ENCODE measurements at regions of chr7 and their contacts with region 1.

Region 1: GRCh38 chr7:131654668-131655326 is 98.4 kb upstream of the PODXL start:
- DNase-seq: peak; percentile 97
- ATAC-seq: peak; percentile 87
- H3K4me3 Mint-ChIP-seq: no peak overlapping the region
- H3K27ac Mint-ChIP-seq: no peak overlapping the region
- H3K4me1 Mint-ChIP-seq: peaks cover 46% of the 10 kb centered on the region
- H3K27me3 Mint-ChIP-seq: peaks cover 8% of the 10 kb centered on the region; the same call in 1 of the 2 replicates
- CTCF ChIP-seq: peak; percentile 99

Region 2: DNA sequence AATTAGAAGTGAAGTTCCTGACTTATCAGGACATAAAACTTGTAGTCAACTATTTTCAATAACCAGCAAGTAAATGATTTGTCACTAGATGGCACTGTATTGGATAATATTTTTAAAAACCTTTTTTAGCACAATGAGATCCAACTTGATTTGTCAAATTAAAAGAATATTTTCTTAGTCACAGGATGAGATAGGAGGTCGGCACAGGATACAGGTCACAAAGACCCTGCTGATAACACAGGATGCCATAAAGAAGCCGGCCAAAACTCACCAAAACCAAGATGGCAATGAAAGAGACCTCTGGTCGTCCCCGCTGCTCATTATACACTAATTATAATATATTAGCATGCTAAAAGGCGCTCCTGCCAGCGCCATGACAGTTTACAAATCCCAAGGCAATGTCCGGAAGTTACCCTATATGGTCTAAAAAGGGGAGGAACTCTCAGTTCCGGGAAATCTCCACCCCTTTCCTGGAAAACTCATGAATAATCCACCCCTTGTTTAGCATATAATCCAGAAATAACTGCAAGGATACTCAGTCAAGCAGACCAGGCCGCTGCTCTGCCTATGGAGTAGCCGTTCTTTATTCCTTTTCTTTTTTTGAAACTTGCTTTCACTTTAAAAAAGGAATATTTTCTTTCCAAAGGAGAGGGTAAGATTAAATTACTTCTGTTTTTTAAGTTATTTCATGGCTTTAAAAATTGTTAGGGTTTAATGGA is 582.9 kb before region 1 on chr7:
- CTCF ChIA-PET with region 1: no interaction called
- POLR2A ChIA-PET with region 1: no interaction called
- DNase-seq: no peak
- ATAC-seq: no peak
- H3K4me3 Mint-ChIP-seq: no peak overlapping the region
- H3K27ac Mint-ChIP-seq: 0 out of 2 replicates have a peak overlapping the region, but pooled peaks have one; percentile 14
- H3K4me1 Mint-ChIP-seq: peaks cover 47% of the 10 kb centered on the region
- H3K27me3 Mint-ChIP-seq: no peaks in the 10 kb centered on the region
- CTCF ChIP-seq: no peak

Region 3: GRCh38 chr7:131443496-131443895 is 211.3 kb before region 1 on chr7:
- CTCF ChIA-PET with region 1: no interaction called
- POLR2A ChIA-PET with region 1: no interaction called
- DNase-seq: no peak
- ATAC-seq: no peak
- H3K4me3 Mint-ChIP-seq: no peak overlapping the region
- H3K27ac Mint-ChIP-seq: no peak overlapping the region
- H3K4me1 Mint-ChIP-seq: peaks cover 13% of the 10 kb centered on the region
- H3K27me3 Mint-ChIP-seq: no peaks in the 10 kb centered on the region
- CTCF ChIP-seq: no peak

Region 4: DNA sequence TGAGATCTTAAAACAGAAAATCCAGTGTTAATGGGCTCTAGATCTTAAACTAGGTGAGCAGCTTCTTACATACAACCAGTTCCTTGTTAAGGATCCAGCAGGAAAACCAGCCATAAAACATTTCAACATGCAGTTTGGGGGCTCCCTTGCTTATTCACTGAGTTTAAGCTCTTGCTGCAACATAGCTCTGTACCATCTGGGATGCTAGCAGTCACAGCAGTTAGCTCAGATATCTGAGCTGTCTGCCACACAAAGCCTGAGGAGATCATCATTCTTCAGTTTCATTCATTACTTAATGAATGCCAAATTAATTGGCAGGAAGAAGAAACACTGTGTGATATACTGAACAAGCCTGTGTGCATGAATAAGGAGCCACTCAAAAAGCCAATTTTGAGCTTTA is 161.2 kb before region 1 on chr7:
- CTCF ChIA-PET with region 1: interaction called, 11 read pairs
- POLR2A ChIA-PET with region 1: no interaction called
- DNase-seq: no peak
- ATAC-seq: peak; percentile 6; the same call in 1 of the 2 replicates
- H3K4me3 Mint-ChIP-seq: no peak overlapping the region
- H3K27ac Mint-ChIP-seq: 0 out of 2 replicates have a peak overlapping the region, but pooled peaks have one; percentile 21
- H3K4me1 Mint-ChIP-seq: no peaks in the 10 kb centered on the region
- H3K27me3 Mint-ChIP-seq: no peaks in the 10 kb centered on the region
- CTCF ChIP-seq: no peak

Region 5: GRCh38 chr7:131513245-131514061 is 141.3 kb before region 1 on chr7:
- CTCF ChIA-PET with region 1: interaction called, 22 read pairs
- POLR2A ChIA-PET with region 1: no interaction called
- DNase-seq: peak; percentile 90
- ATAC-seq: peak; percentile 94
- H3K4me3 Mint-ChIP-seq: no peak overlapping the region
- H3K27ac Mint-ChIP-seq: peak overlapping the region; percentile 97
- H3K4me1 Mint-ChIP-seq: peaks cover 76% of the 10 kb centered on the region
- H3K27me3 Mint-ChIP-seq: no peaks in the 10 kb centered on the region
- CTCF ChIP-seq: peak; percentile 98

Region 6: GRCh38 chr7:131538071-131538790 is 116.6 kb before region 1 on chr7:
- CTCF ChIA-PET with region 1: interaction called, 10 read pairs
- POLR2A ChIA-PET with region 1: interaction called, 3 read pairs
- DNase-seq: no peak
- ATAC-seq: peak; percentile 7
- H3K4me3 Mint-ChIP-seq: no peak overlapping the region
- H3K27ac Mint-ChIP-seq: peak overlapping the region; percentile 95
- H3K4me1 Mint-ChIP-seq: peaks cover 90% of the 10 kb centered on the region
- H3K27me3 Mint-ChIP-seq: no peaks in the 10 kb centered on the region
- CTCF ChIP-seq: no peak

Region 7: DNA sequence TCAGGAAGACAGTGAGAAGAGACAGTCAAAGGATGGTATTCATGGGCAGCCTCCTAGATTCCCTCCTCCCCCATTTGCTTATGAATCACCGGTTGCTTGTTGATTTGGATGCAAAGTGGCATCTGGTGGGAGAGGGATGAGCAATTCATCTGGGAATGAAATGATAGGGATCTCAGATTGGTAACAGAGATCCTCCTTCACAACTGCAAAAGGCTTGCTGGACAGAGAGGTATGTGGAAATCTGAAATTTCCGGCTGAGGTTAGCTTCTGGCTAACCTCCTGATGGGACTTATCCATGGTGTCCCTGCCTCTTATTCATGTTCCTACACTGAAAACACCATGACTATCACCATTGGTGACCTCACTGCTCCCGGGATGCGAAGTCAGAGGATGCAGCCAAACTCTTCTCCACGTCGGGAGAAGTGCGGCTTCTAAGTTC is 49.9 kb before region 1 on chr7:
- CTCF ChIA-PET with region 1: interaction called, 19 read pairs
- POLR2A ChIA-PET with region 1: no interaction called
- DNase-seq: no peak
- ATAC-seq: peak; percentile 43
- H3K4me3 Mint-ChIP-seq: peak overlapping the region; percentile 59
- H3K27ac Mint-ChIP-seq: peak overlapping the region; percentile 100
- H3K4me1 Mint-ChIP-seq: peaks cover 81% of the 10 kb centered on the region
- H3K27me3 Mint-ChIP-seq: no peaks in the 10 kb centered on the region; the same call in 1 of the 2 replicates
- CTCF ChIP-seq: no peak

Region 8: GRCh38 chr7:131625817-131626372 is 28.9 kb before region 1 on chr7:
- CTCF ChIA-PET with region 1: interaction called, 25 read pairs
- POLR2A ChIA-PET with region 1: interaction called, 3 read pairs
- DNase-seq: peak; percentile 68
- ATAC-seq: peak; percentile 85
- H3K4me3 Mint-ChIP-seq: no peak overlapping the region; the same call in 1 of the 2 replicates
- H3K27ac Mint-ChIP-seq: peak overlapping the region; percentile 98
- H3K4me1 Mint-ChIP-seq: peaks cover 69% of the 10 kb centered on the region
- H3K27me3 Mint-ChIP-seq: peaks cover 16% of the 10 kb centered on the region
- CTCF ChIP-seq: no peak

Measured in WTC11 (cell line).